ENCODE measurements at regions of chr17 and their contacts with region 1.

Region 1: DNA sequence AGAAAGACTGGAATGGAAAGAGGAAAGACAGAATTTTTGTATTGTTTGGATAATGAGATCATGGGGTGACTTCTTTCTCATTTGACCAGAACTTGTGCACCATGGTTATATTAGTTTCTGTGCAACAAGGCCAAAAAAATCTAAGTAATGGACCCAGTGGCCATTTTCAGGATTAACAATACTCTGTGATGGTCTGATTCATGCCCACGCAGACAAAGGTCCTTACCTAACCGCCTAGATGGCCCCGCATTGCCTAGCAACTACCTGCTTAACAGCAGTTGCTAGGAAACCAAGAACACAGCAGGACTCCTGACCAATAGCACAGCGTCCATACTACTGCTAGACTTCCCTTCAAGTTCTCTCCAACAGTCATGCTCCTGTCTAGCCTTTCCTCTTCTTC is 22.4 kb downstream of the MIS12 start:
- DNase-seq: no peak
- ATAC-seq: no peak
- H3K4me3 ChIP-seq: no peak overlapping the region
- H3K27ac ChIP-seq: no peak overlapping the region
- H3K4me1 ChIP-seq: no peaks in the 10 kb centered on the region
- H3K27me3 ChIP-seq: no peaks in the 10 kb centered on the region
- CTCF ChIP-seq: no peak

Region 2: GRCh38 chr17:4554997-4555799 is 953.6 kb before region 1 on chr17 and contains the start of gene MYBBP1A:
- CTCF ChIA-PET with region 1: no interaction called
- POLR2A ChIA-PET with region 1: no interaction called
- intact Hi-C with region 1: no loop called
- DNase-seq: peak; percentile 93
- ATAC-seq: peak; percentile 96
- H3K4me3 ChIP-seq: peak within 1 kb of the TSS; percentile 98
- H3K27ac ChIP-seq: peak within 1 kb of the TSS; percentile 51
- H3K4me1 ChIP-seq: peaks cover 9% of the 10 kb centered on the region; the same call in 1 of the 2 replicates
- H3K27me3 ChIP-seq: no peaks in the 10 kb centered on the region
- CTCF ChIP-seq: no peak
- total RNA-seq, gene MYBBP1A: 155 and 171 TPM in 2 replicates

Region 3: DNA sequence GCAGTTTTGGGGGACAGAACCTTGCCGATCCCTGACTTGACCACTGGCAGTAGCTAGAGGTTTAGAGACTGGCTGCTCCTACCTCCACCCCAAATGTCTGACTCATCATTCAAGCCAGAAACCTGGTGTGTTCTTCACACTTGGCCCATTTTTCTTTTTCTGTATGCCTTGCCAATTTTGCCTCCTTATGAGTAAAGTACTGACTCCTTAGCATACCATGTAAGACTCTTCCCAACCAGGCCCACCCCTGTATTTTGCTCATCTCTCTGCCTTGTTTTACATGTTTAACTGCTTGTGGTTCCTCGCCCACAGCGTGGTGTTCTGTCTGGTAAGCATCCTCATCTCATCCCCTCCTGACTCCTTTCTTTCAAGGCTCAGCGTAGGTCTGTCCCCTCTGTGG is 127.3 kb before region 1 on chr17:
- CTCF ChIA-PET with region 1: no interaction called
- POLR2A ChIA-PET with region 1: no interaction called
- intact Hi-C with region 1: no loop called
- DNase-seq: peak; percentile 46
- ATAC-seq: peak; percentile 77
- H3K4me3 ChIP-seq: no peak overlapping the region
- H3K27ac ChIP-seq: no peak overlapping the region
- H3K4me1 ChIP-seq: peaks cover 7% of the 10 kb centered on the region
- H3K27me3 ChIP-seq: no peaks in the 10 kb centered on the region
- CTCF ChIP-seq: no peak

Region 4: GRCh38 chr17:5468075-5468473 is 40.7 kb before region 1 on chr17:
- CTCF ChIA-PET with region 1: no interaction called
- POLR2A ChIA-PET with region 1: no interaction called
- intact Hi-C with region 1: no loop called
- DNase-seq: no peak
- ATAC-seq: peak; percentile 14
- H3K4me3 ChIP-seq: peak overlapping the region; percentile 97
- H3K27ac ChIP-seq: peak overlapping the region; percentile 52
- H3K4me1 ChIP-seq: peaks cover 13% of the 10 kb centered on the region
- H3K27me3 ChIP-seq: no peaks in the 10 kb centered on the region
- CTCF ChIP-seq: no peak

Region 5: DNA sequence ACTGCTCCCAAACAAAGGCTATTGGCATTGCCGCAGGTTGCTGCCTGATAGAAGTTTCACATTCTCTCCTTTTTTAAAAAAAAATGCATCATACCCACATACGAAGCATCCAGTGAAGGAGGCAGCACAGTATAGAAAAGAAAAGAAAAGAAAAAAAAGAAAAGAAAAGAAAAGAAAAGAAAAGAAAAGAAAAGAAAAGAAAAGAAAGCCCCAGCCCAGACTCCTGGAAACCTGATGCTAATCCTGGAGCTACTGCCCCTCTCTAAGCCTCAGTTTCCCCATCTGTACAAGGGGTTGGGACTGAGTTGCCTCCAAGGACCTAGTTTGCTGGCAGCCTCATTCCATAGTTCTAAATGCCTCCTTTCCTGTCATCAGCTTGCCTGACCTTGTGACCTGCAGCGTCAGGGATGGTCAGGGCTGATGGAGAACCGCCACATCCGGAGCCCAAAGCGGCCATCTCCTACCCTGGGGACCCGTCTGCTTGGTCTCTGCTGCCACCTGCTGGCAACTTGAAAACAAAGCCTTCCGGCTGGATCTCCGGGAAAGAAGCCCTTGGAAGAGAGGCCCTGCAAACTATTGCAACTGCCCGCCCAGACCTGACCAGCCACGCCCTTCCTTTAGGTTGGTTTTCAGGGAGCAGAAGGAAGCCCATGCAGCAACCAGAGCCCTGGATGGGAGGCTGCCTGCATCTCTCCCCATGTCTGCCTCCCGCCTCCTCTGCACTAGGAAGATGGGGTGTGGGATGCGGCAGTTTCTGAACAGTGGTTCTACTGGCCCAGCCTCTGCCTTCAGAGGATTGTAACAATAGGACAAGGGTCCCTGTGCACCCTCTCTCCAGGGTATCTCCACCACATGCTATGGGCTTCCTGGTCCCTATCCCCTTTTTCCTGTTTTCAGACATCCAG is 913.1 kb after region 1 on chr17:
- CTCF ChIA-PET with region 1: no interaction called
- POLR2A ChIA-PET with region 1: no interaction called
- intact Hi-C with region 1: loop called (anchors 5 kb)
- DNase-seq: peak; percentile 82
- ATAC-seq: peak; percentile 88
- H3K4me3 ChIP-seq: no peak overlapping the region
- H3K27ac ChIP-seq: no peak overlapping the region
- H3K4me1 ChIP-seq: no peaks in the 10 kb centered on the region
- H3K27me3 ChIP-seq: no peaks in the 10 kb centered on the region
- CTCF ChIP-seq: peak; percentile 86